Tibial artery (tissue), 4 donors: ENCODE measurements at regions of chr12 and their contacts with region 1.

Region 1: GRCh38 chr12:123436017-123436964 is at the start of gene RILPL2:
- DNase-seq: peak; percentile 92 to 95
- H3K4me3 ChIP-seq: peak within 1 kb of the TSS; percentile 90
- H3K27ac ChIP-seq: peak within 1 kb of the TSS; percentile 90 to 94
- H3K4me1 ChIP-seq: peaks cover 0 to 45% (median 29%) of the 10 kb centered on the region in 4 donors
- H3K27me3 ChIP-seq: no peaks in the 10 kb centered on the region
- CTCF ChIP-seq: peak in 1 of 2 experiments; percentile 33

Region 2: GRCh38 chr12:123389560-123390351 is 46.5 kb before region 1 on chr12:
- intact Hi-C with region 1: loop called (anchors 5 kb)
- DNase-seq: peak in 1 of 2 donors; percentile 75
- H3K4me3 ChIP-seq: peak overlapping the region; percentile 59 to 83
- H3K27ac ChIP-seq: peak overlapping the region; percentile 90 to 92
- H3K4me1 ChIP-seq: peaks cover 0 to 61% (median 37%) of the 10 kb centered on the region in 4 donors
- H3K27me3 ChIP-seq: no peaks in the 10 kb centered on the region
- CTCF ChIP-seq: no peak

Region 3: DNA sequence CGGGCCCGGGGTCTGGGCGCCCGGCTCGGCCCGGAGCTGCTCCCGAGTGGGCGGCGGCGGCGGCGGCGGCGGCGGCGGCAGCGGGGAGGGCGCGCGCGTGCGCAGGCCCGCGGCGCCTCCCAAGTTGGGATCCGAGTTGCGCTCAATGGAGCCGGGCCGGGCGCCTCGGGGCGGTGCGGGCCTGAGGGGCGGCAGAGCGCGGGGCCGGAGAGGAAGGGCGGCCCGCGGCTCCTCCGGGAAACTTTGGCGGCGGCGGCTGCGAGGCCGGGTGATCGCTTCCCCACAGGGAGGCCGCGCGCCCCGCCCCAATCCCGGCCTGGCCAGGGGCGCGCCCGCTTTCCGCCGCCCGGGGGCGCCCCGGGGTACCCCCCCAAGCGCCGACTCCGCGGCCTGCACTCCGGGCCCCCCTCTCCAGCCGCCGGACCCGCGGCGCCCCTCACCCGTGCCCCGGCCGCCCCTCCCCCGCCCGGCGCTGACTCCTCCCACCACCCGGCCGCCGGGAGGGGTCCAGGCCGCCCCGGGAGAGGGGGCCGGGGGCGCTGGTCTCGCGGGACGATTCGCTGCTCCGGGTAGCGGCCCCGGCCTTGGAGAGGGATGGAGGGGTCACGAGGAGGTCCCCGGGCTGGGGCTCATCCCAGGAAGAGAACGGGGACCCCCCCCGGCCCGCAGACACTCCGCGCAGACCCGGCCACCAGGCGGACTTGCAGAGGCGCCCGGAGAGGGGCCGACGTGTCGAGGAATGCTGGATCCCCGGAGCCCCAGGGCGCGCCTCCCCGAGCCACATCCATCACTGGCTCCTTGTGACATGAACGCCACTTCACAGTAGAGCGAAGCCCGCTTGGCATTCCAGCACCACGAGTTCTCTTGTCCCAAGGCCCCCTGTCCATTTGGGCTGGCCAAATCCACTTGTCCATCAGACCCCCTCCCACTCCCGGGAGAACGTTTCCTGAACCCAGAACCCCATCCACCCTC is 97.7 kb after region 1 on chr12 and contains the start of gene RILPL1:
- intact Hi-C with region 1: no loop called
- DNase-seq: peak; percentile 36 to 75
- H3K4me3 ChIP-seq: peak within 1 kb of the TSS; percentile 75 to 93
- H3K27ac ChIP-seq: peak within 1 kb of the TSS; percentile 92 to 96
- H3K4me1 ChIP-seq: peaks cover 0 to 38% (median 34%) of the 10 kb centered on the region in 4 donors
- H3K27me3 ChIP-seq: no peaks in the 10 kb centered on the region
- CTCF ChIP-seq: peak; percentile 28 to 45

Region 4: DNA sequence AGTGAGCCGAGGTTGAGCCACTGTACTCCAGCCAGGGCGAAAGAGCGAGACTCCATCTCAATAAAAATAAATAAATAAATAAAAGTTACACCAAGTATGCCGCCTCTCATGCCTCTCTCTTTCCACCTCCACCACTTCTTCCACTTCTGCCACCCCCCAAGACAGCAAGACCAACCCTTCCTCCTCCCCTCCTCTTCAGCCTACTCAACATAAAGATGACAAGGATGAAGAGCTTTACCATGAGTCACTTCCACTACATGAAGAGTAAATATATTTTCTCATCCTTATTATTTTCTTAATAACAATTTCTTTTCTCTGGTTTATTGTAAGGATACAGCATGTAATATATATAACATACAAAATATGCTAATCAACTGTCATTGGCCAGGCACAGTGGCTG is 144.5 kb after region 1 on chr12:
- intact Hi-C with region 1: loop called (anchors 5 kb)
- DNase-seq: no peak
- H3K4me3 ChIP-seq: no peak overlapping the region
- H3K27ac ChIP-seq: no peak overlapping the region
- H3K4me1 ChIP-seq: peaks cover 0 to 32% (median 19%) of the 10 kb centered on the region in 4 donors
- H3K27me3 ChIP-seq: no peaks in the 10 kb centered on the region
- CTCF ChIP-seq: no peak

Region 5: GRCh38 chr12:124359671-124360581 is 923.6 kb after region 1 on chr12:
- intact Hi-C with region 1: no loop called
- DNase-seq: peak; percentile 96 to 100
- H3K4me3 ChIP-seq: no peak overlapping the region
- H3K27ac ChIP-seq: peak overlapping the region; percentile 71 to 76
- H3K4me1 ChIP-seq: peaks cover 3 to 36% (median 24%) of the 10 kb centered on the region in 4 donors
- H3K27me3 ChIP-seq: no peaks in the 10 kb centered on the region
- CTCF ChIP-seq: no peak